Prostate gland (tissue), 2 donors: ENCODE measurements at regions of chr19 and their contacts with region 1.

Region 1: GRCh38 chr19:52748336-52748950 is 13.6 kb upstream of the ZNF611 start:
- DNase-seq: peak; percentile 22
- H3K4me3 ChIP-seq: no peak overlapping the region
- H3K27ac ChIP-seq: no peak overlapping the region
- H3K4me1 ChIP-seq: peaks cover 3% of the 10 kb centered on the region
- H3K27me3 ChIP-seq: no peaks in the 10 kb centered on the region
- CTCF ChIP-seq: peak in 3 of 4 experiments; percentile 24 to 59 (median 46)
- POLR2A ChIP-seq: no peak

Region 2: GRCh38 chr19:52248241-52248640 is 500.2 kb before region 1 on chr19:
- intact Hi-C with region 1: loop called (anchors 10 kb)
- DNase-seq: peak; percentile 48
- H3K4me3 ChIP-seq: no peak overlapping the region
- H3K27ac ChIP-seq: no peak overlapping the region
- H3K4me1 ChIP-seq: no peaks in the 10 kb centered on the region
- H3K27me3 ChIP-seq: no peaks in the 10 kb centered on the region
- CTCF ChIP-seq: peak in 3 of 4 experiments; percentile 34 to 66 (median 57)
- POLR2A ChIP-seq: no peak

Region 3: DNA sequence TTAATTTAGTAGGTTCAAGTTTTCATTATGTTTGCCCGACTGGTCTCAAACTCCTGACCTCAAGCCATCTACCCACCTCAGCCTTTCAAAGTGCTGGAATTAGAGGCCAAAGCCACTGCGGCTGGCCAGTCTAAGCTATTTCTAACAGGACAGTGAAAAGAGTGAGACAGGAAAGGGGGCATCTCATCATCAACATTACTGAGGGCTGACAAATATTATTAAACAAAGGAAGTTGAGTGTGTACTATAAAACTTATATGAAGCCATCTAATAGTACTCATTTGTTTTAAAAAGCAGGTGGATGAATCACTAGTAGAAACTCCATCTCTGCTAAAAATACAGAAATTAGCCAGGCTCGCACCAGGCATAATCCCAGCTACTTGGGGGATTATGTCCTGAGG is 37.9 kb before region 1 on chr19:
- intact Hi-C with region 1: no loop called
- DNase-seq: no peak
- H3K4me3 ChIP-seq: no peak overlapping the region
- H3K27ac ChIP-seq: no peak overlapping the region
- H3K4me1 ChIP-seq: no peaks in the 10 kb centered on the region
- H3K27me3 ChIP-seq: no peaks in the 10 kb centered on the region
- CTCF ChIP-seq: no peak
- POLR2A ChIP-seq: no peak

Region 4: GRCh38 chr19:52922841-52923777 is 174.7 kb after region 1 on chr19 and contains the start of gene ZNF888:
- intact Hi-C with region 1: no loop called
- DNase-seq: peak; percentile 92
- H3K4me3 ChIP-seq: peak within 1 kb of the TSS; percentile 42 to 56
- H3K27ac ChIP-seq: peak within 1 kb of the TSS; percentile 80 to 92
- H3K4me1 ChIP-seq: peaks cover 5% of the 10 kb centered on the region
- H3K27me3 ChIP-seq: no peaks in the 10 kb centered on the region
- CTCF ChIP-seq: peak in 1 of 4 experiments; percentile 8
- POLR2A ChIP-seq: peak; percentile 81
- total RNA-seq, gene ZNF888: 21.4 to 34.5 TPM